Esophagus squamous epithelium (tissue), 5 donors: ENCODE measurements at regions of chr2 and their contacts with region 1.

Region 1: GRCh38 chr2:20443276-20443920 is 3.5 kb upstream of the RHOB start:
- DNase-seq: no peak
- H3K4me3 ChIP-seq: peak overlapping the region in 1 of 4 donors; percentile 19
- H3K27ac ChIP-seq: peak overlapping the region; percentile 30 to 86 (median 81)
- H3K4me1 ChIP-seq: peaks cover 25 to 67% (median 30%) of the 10 kb centered on the region in 3 donors
- H3K27me3 ChIP-seq: peaks cover 0 to 5% (median 0%) of the 10 kb centered on the region in 4 donors
- CTCF ChIP-seq: peak; percentile 34 to 53 (median 41)
- POLR2A ChIP-seq: no peak

Region 2: GRCh38 chr2:20326163-20326780 is 117.1 kb before region 1 on chr2:
- intact Hi-C with region 1: no loop called
- DNase-seq: no peak
- H3K4me3 ChIP-seq: no peak overlapping the region
- H3K27ac ChIP-seq: peak overlapping the region in 2 of 4 donors; percentile 60 to 71
- H3K4me1 ChIP-seq: peaks cover 0 to 33% (median 16%) of the 10 kb centered on the region in 3 donors
- H3K27me3 ChIP-seq: no peaks in the 10 kb centered on the region
- CTCF ChIP-seq: peak; percentile 37 to 71 (median 60)
- POLR2A ChIP-seq: no peak

Region 3: DNA sequence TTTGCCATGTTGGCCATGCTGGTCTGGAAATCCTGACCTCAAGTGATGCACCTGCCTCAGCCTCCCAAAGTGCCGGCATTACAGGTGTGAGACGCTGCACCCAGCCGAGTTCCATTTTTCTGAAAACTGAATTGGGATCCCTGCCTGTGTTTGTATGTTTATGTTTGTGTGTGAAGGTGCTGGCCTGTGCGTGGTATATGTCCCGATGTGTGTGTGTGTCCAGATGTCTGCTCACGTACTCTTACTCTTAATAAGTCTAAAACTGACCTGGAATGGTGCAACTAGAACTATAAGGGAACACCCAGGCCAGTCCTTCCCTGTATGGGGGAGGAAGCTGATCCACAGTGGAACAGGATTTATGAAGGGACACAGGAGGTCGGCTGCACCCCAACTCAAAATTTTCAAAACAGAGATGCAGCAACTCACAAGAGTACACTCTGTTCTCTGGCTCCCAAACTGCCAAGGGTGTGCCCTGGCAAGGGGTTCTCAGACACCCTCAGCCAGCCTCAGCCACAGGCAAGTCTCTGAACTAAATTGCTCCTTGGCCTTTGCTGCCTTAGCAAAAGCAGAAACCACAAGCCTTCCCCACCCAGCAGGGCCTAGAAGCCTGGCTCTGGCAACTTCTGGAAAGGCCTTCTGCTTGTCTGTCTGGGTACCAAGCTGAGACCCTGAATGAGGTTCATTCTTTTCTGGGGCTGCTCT is 39.9 kb after region 1 on chr2:
- intact Hi-C with region 1: no loop called
- DNase-seq: no peak
- H3K4me3 ChIP-seq: no peak overlapping the region
- H3K27ac ChIP-seq: peak overlapping the region; percentile 40 to 71 (median 64)
- H3K4me1 ChIP-seq: peaks cover 11 to 47% (median 23%) of the 10 kb centered on the region in 3 donors
- H3K27me3 ChIP-seq: no peaks in the 10 kb centered on the region
- CTCF ChIP-seq: no peak
- POLR2A ChIP-seq: no peak

Region 4: GRCh38 chr2:20617892-20618467 is 174.6 kb after region 1 on chr2:
- intact Hi-C with region 1: no loop called
- DNase-seq: peak; percentile 32
- H3K4me3 ChIP-seq: no peak overlapping the region
- H3K27ac ChIP-seq: peak overlapping the region; percentile 81 to 96 (median 92)
- H3K4me1 ChIP-seq: peaks cover 54 to 91% (median 64%) of the 10 kb centered on the region in 3 donors
- H3K27me3 ChIP-seq: no peaks in the 10 kb centered on the region
- CTCF ChIP-seq: peak in 5 of 6 experiments; percentile 37 to 67 (median 55)
- POLR2A ChIP-seq: peak in 1 of 4 donors; percentile 38

Region 5: DNA sequence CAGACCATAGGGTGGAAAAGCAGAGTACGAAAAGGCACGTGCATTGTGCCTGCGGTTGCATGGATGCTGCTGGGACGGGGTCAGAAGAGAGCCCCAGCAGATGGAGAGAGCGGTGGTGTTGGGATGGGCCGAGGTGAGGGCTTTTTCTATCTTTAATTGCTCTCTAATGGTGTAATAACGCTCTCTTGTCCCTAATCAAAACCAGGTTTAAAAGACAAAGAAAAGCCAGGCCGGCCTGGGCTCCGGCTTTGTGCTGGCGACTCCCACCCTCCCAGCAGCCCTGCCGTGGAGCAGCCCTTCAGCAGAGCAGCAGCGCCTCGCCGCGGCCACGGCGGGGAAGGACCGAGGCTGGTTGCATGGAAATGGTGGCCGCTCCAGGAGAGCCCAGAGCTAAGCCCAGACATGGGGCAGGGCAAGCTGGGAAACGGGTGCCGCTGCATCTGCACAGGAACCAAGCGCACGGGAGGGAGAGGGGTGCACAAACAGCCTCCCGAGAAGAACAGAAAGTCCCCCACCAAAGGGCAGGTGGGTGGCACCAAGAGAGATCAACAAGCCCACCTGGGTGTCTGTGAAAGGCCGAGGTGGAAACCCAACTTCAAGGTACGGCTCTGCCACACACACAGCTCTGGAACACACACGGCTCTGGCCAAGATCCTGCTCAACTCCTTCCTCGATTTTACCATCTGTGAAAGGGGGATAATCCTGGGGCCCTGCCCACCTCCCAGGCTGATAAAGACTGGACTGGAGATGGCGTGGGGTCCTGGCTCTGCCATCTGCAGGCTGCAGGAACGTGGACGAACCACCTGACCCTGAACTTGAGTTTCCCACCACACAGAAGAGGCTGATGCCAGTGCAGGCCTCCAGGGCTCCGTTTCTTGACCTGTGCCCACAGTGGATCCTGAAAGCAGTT is 192.5 kb after region 1 on chr2:
- intact Hi-C with region 1: loop called (anchors 5 kb)
- DNase-seq: no peak
- H3K4me3 ChIP-seq: peak overlapping the region in 1 of 4 donors; percentile 4
- H3K27ac ChIP-seq: peak overlapping the region; percentile 49 to 85 (median 82)
- H3K4me1 ChIP-seq: peaks cover 11 to 64% (median 26%) of the 10 kb centered on the region in 3 donors
- H3K27me3 ChIP-seq: no peaks in the 10 kb centered on the region
- CTCF ChIP-seq: peak; percentile 74 to 98 (median 92)
- POLR2A ChIP-seq: no peak

Region 6: GRCh38 chr2:21270708-21271122 is 827.3 kb after region 1 on chr2:
- intact Hi-C with region 1: no loop called
- DNase-seq: no peak
- H3K4me3 ChIP-seq: no peak overlapping the region
- H3K27ac ChIP-seq: peak overlapping the region in 1 of 4 donors; percentile 21
- H3K4me1 ChIP-seq: no peaks in the 10 kb centered on the region
- H3K27me3 ChIP-seq: no peaks in the 10 kb centered on the region
- CTCF ChIP-seq: no peak
- POLR2A ChIP-seq: no peak